Natural killer cell (primary cell): ENCODE measurements at regions of chr1 and their contacts with region 1.

Region 1: DNA sequence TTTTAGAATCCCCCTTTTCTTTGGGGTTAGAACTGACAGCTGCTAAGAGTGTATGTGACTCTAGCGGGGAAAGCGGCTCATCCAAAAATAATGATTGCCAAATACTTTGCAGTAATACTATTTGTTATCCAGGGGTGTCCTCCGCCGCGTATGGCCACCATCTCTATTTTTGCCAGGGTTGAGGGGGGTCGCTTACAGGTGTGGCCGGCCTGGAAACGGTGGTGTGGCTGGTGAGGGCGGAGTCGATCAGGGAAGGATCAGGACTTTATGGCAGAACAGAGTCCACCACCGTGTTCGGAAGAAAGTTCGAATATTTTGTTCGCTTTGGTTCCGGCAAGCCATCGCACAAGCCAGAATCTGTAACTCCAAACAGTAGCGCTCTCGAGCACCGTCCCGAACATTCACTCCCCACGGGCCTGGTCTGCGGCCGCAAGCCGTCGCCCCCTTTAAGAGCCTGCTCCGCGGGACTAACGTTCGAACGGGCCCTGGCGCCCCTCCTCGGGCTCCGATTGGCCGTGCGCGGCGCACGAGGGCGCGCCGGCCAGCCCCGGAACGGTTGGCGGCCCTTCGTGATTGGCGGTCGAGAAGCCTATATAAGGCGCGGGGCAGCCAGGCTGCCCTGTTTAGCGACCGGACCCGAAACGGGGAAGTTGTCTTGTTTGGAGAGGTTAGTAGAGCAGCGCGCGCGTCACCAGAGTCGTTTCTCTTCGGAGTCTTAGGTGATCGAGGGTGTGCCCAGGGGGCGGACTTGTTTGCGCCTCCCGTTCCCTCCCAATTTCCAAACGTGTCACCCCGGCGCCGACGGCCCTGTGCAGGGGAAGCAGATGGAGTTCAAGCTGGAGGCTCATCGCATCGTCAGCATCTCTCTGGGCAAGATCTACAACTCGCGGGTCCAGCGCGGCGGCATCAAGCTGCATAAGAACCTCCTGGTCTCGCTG is at the start of gene IER5:
- DNase-seq: peak; percentile 97 to 98
- ATAC-seq: peak; percentile 71 to 89 (median 76)
- H3K4me3 ChIP-seq: peak within 1 kb of the TSS; percentile 94
- H3K4me3 Mint-ChIP-seq: peak within 1 kb of the TSS; percentile 98
- H3K27ac ChIP-seq: peak within 1 kb of the TSS; percentile 98
- H3K27ac Mint-ChIP-seq: peak within 1 kb of the TSS; percentile 99 to 100
- H3K4me1 ChIP-seq: peaks cover 7% of the 10 kb centered on the region
- H3K4me1 Mint-ChIP-seq: peaks cover 48 to 56% of the 10 kb centered on the region in 2 donors
- H3K27me3 ChIP-seq: no peaks in the 10 kb centered on the region
- H3K27me3 Mint-ChIP-seq: no peaks in the 10 kb centered on the region
- CTCF ChIP-seq: no peak
- total RNA-seq, gene IER5: 118 to 164 (median 150) TPM

Region 2: GRCh38 chr1:180402001-180402400 is 686.3 kb before region 1 on chr1:
- intact Hi-C with region 1: no loop called
- DNase-seq: no peak
- ATAC-seq: no peak
- H3K4me3 ChIP-seq: no peak overlapping the region
- H3K4me3 Mint-ChIP-seq: no peak overlapping the region
- H3K27ac ChIP-seq: no peak overlapping the region
- H3K27ac Mint-ChIP-seq: no peak overlapping the region
- H3K4me1 ChIP-seq: no peaks in the 10 kb centered on the region
- H3K4me1 Mint-ChIP-seq: peaks cover 2 to 18% of the 10 kb centered on the region in 2 donors
- H3K27me3 ChIP-seq: no peaks in the 10 kb centered on the region
- H3K27me3 Mint-ChIP-seq: no peaks in the 10 kb centered on the region
- CTCF ChIP-seq: no peak

Region 3: GRCh38 chr1:180451504-180451903 is 636.8 kb before region 1 on chr1:
- intact Hi-C with region 1: no loop called
- DNase-seq: no peak
- ATAC-seq: no peak
- H3K4me3 ChIP-seq: no peak overlapping the region
- H3K4me3 Mint-ChIP-seq: no peak overlapping the region
- H3K27ac ChIP-seq: no peak overlapping the region
- H3K27ac Mint-ChIP-seq: no peak overlapping the region
- H3K4me1 ChIP-seq: no peaks in the 10 kb centered on the region
- H3K4me1 Mint-ChIP-seq: peaks cover 10 to 35% of the 10 kb centered on the region in 2 donors
- H3K27me3 ChIP-seq: no peaks in the 10 kb centered on the region
- H3K27me3 Mint-ChIP-seq: no peaks in the 10 kb centered on the region
- CTCF ChIP-seq: no peak

Region 4: GRCh38 chr1:181044449-181044966 is 43.8 kb before region 1 on chr1:
- intact Hi-C with region 1: loop called (anchors 1 kb)
- DNase-seq: peak; percentile 69 to 73
- ATAC-seq: peak; percentile 90 to 97 (median 95)
- H3K4me3 ChIP-seq: no peak overlapping the region
- H3K4me3 Mint-ChIP-seq: peak overlapping the region; percentile 81
- H3K27ac ChIP-seq: peak overlapping the region; percentile 78
- H3K27ac Mint-ChIP-seq: peak overlapping the region; percentile 90 to 97
- H3K4me1 ChIP-seq: peaks cover 31% of the 10 kb centered on the region
- H3K4me1 Mint-ChIP-seq: peaks cover 45 to 46% of the 10 kb centered on the region in 2 donors
- H3K27me3 ChIP-seq: no peaks in the 10 kb centered on the region
- H3K27me3 Mint-ChIP-seq: no peaks in the 10 kb centered on the region
- CTCF ChIP-seq: no peak

Region 5: GRCh38 chr1:181142096-181142958 is 54.0 kb after region 1 on chr1:
- intact Hi-C with region 1: loop called (anchors 1 kb)
- DNase-seq: peak; percentile 87 to 93
- ATAC-seq: peak; percentile 96 to 99 (median 96)
- H3K4me3 ChIP-seq: no peak overlapping the region
- H3K4me3 Mint-ChIP-seq: no peak overlapping the region
- H3K27ac ChIP-seq: no peak overlapping the region
- H3K27ac Mint-ChIP-seq: peak overlapping the region; percentile 11 to 71
- H3K4me1 ChIP-seq: peaks cover 23% of the 10 kb centered on the region
- H3K4me1 Mint-ChIP-seq: peaks cover 33 to 40% of the 10 kb centered on the region in 2 donors
- H3K27me3 ChIP-seq: no peaks in the 10 kb centered on the region
- H3K27me3 Mint-ChIP-seq: peaks cover 8 to 23% of the 10 kb centered on the region in 2 donors
- CTCF ChIP-seq: peak; percentile 92

Region 6: GRCh38 chr1:182614796-182615454 is 1526.6 kb after region 1 on chr1:
- intact Hi-C with region 1: loop called (anchors 5 kb)
- DNase-seq: peak; percentile 53 to 72
- ATAC-seq: peak; percentile 45 to 61 (median 48)
- H3K4me3 ChIP-seq: peak overlapping the region; percentile 36
- H3K4me3 Mint-ChIP-seq: peak overlapping the region; percentile 89
- H3K27ac ChIP-seq: no peak overlapping the region
- H3K27ac Mint-ChIP-seq: peak overlapping the region; percentile 85 to 94
- H3K4me1 ChIP-seq: peaks cover 32% of the 10 kb centered on the region
- H3K4me1 Mint-ChIP-seq: peaks cover 35 to 39% of the 10 kb centered on the region in 2 donors
- H3K27me3 ChIP-seq: peaks cover 54% of the 10 kb centered on the region
- H3K27me3 Mint-ChIP-seq: peaks cover 75 to 88% of the 10 kb centered on the region in 2 donors
- CTCF ChIP-seq: no peak